ENCODE measurements at regions of chr5 and their contacts with region 1.

Region 1: DNA sequence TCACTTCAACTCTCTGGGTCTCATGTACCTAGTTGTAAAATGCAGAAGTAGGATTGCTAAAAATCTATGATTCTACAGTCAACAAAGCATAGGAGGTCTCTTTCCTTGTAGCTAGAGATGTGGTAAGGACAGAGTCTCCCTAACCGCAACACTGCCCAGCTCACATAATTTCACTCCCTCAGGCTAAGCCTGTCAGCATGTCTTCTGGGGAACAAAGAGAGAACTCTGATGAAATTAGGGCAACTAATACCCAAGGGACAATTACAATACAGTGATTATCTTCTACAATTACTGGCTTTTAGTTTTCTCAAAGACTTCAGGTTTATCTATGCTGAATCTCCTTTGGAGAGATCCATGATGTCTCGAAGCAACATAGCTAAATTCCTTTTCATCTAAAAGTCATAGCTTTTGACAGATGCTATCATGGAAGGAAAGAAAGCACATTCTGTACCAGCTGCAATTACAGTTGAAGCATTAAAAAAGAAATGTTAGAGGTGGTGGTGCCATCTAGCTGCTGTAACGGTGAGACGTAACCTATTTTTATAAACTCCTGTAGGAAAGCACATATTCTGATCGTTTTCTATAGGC is 141.1 kb upstream of the TARS1 start:
- DNase-seq: peak in 2 of 5 donors; percentile 65 to 76
- H3K4me3 ChIP-seq: peak overlapping the region in 1 of 3 donors; percentile 42
- H3K27ac ChIP-seq: no peak overlapping the region
- H3K4me1 ChIP-seq: peaks cover 3 to 8% (median 6%) of the 10 kb centered on the region in 3 donors
- H3K27me3 ChIP-seq: no peaks in the 10 kb centered on the region
- CTCF ChIP-seq: peak; percentile 49

Region 2: DNA sequence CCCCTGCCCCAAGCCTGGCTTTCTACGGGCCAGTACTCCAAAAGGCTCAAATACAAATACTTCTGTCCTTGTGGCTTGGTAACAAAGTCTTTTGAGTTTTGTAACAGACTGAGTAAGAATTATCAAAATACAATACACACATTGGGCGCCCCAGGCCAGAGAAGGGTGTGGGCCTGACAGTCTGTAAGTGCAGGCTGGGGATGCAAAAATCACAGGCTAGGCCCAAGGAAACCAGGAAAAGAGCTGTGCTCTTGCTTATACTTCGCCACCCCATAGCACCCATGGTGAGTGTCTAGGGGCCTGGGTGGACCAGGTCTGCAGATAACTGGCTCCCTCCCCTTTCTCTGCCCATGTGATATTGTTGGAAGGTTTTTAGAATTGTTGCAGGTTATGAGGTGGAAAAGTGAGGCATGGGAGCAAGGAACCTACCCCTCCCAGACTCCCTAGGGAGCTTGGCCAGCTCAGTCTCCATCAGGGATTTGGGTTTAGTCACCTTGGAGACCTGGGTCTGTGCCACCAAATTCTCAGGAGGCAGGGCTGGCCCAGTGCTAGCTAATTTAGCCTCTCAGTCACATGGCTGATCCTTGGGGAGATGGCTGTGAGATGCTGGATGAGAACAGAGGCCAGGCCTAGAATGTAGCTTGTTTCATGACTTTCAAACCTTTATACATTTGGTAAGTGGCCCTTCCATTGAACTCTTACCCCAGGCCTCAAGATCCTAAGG is 213.9 kb after region 1 on chr5:
- intact Hi-C with region 1: loop called (anchors 10 kb)
- DNase-seq: no peak
- H3K4me3 ChIP-seq: no peak overlapping the region
- H3K27ac ChIP-seq: no peak overlapping the region
- H3K4me1 ChIP-seq: peaks cover 0 to 4% (median 0%) of the 10 kb centered on the region in 3 donors
- H3K27me3 ChIP-seq: no peaks in the 10 kb centered on the region
- CTCF ChIP-seq: no peak